Activated CD8-positive, alpha-beta T cell treated with anti-CD3 and anti-CD28 coated beads for 36 hours (primary cell): ENCODE measurements at regions of chr4 and their contacts with region 1.

Region 1: GRCh38 chr4:25159884-25160713 is at the start of gene SEPSECS:
- DNase-seq: peak; percentile 96
- ATAC-seq: peak; percentile 88
- H3K4me3 Mint-ChIP-seq: peak within 1 kb of the TSS; percentile 81
- H3K27ac Mint-ChIP-seq: peak within 1 kb of the TSS; percentile 88
- H3K4me1 Mint-ChIP-seq: peaks cover 39% of the 10 kb centered on the region
- H3K27me3 Mint-ChIP-seq: no peaks in the 10 kb centered on the region
- CTCF ChIP-seq: no peak
- total RNA-seq, gene SEPSECS: 13.9 to 15.2 TPM

Region 2: GRCh38 chr4:25144870-25145481 is 15.1 kb before region 1 on chr4:
- CTCF ChIA-PET with region 1: interaction called, 15 read pairs
- POLR2A ChIA-PET with region 1: no interaction called
- intact Hi-C with region 1: no loop called
- DNase-seq: no peak
- ATAC-seq: no peak
- H3K4me3 Mint-ChIP-seq: no peak overlapping the region
- H3K27ac Mint-ChIP-seq: no peak overlapping the region
- H3K4me1 Mint-ChIP-seq: no peaks in the 10 kb centered on the region
- H3K27me3 Mint-ChIP-seq: no peaks in the 10 kb centered on the region
- CTCF ChIP-seq: peak; percentile 62

Region 3: GRCh38 chr4:25180524-25181131 is 20.5 kb after region 1 on chr4:
- CTCF ChIA-PET with region 1: interaction called, 22 read pairs
- POLR2A ChIA-PET with region 1: no interaction called
- intact Hi-C with region 1: no loop called
- DNase-seq: peak; percentile 57
- ATAC-seq: peak; percentile 71
- H3K4me3 Mint-ChIP-seq: no peak overlapping the region
- H3K27ac Mint-ChIP-seq: no peak overlapping the region
- H3K4me1 Mint-ChIP-seq: peaks cover 21% of the 10 kb centered on the region
- H3K27me3 Mint-ChIP-seq: no peaks in the 10 kb centered on the region
- CTCF ChIP-seq: peak; percentile 84

Region 4: GRCh38 chr4:25234390-25235370 is 74.6 kb after region 1 on chr4:
- CTCF ChIA-PET with region 1: interaction called, 14 read pairs
- POLR2A ChIA-PET with region 1: interaction called, 14 read pairs
- intact Hi-C with region 1: no loop called
- DNase-seq: peak; percentile 60
- ATAC-seq: peak; percentile 59
- H3K4me3 Mint-ChIP-seq: peak overlapping the region; percentile 94
- H3K27ac Mint-ChIP-seq: peak overlapping the region; percentile 94
- H3K4me1 Mint-ChIP-seq: peaks cover 47% of the 10 kb centered on the region
- H3K27me3 Mint-ChIP-seq: no peaks in the 10 kb centered on the region
- CTCF ChIP-seq: peak; percentile 66

Region 5: GRCh38 chr4:25376754-25377571 is 216.9 kb after region 1 on chr4 and contains the start of gene ANAPC4:
- CTCF ChIA-PET with region 1: no interaction called
- POLR2A ChIA-PET with region 1: interaction called, 3 read pairs
- intact Hi-C with region 1: loop called (anchors 5 kb)
- DNase-seq: peak; percentile 98
- ATAC-seq: peak; percentile 97
- H3K4me3 Mint-ChIP-seq: no peak within 1 kb of the TSS
- H3K27ac Mint-ChIP-seq: peak within 1 kb of the TSS; percentile 85
- H3K4me1 Mint-ChIP-seq: peaks cover 7% of the 10 kb centered on the region
- H3K27me3 Mint-ChIP-seq: no peaks in the 10 kb centered on the region
- CTCF ChIP-seq: no peak
- total RNA-seq, gene ANAPC4: 29.2 to 31.4 TPM